Activated T-helper 1 cell treated with anti-CD3 and anti-CD28 coated beads, Interleukin-12 subunit alpha, Interleukin-12 subunit beta, Interleukin-2, Interleukin-4 antibody, amounts not matched to agents 30 ng/mL and 10 ng/mL and 1 ng/mL, durations not matched to agents 14 hours and 24 hours and 36 hours (primary cell): ENCODE measurements at regions of chr4 and their contacts with region 1.

Region 1: GRCh38 chr4:22515145-22515887 is 550 bp downstream of the ADGRA3 start:
- DNase-seq: peak; percentile 12
- H3K4me3 Mint-ChIP-seq: peak overlapping the region; percentile 96
- H3K27ac Mint-ChIP-seq: peak overlapping the region; percentile 92
- H3K4me1 Mint-ChIP-seq: peaks cover 23% of the 10 kb centered on the region
- H3K27me3 Mint-ChIP-seq: peaks cover 4% of the 10 kb centered on the region

Region 2: DNA sequence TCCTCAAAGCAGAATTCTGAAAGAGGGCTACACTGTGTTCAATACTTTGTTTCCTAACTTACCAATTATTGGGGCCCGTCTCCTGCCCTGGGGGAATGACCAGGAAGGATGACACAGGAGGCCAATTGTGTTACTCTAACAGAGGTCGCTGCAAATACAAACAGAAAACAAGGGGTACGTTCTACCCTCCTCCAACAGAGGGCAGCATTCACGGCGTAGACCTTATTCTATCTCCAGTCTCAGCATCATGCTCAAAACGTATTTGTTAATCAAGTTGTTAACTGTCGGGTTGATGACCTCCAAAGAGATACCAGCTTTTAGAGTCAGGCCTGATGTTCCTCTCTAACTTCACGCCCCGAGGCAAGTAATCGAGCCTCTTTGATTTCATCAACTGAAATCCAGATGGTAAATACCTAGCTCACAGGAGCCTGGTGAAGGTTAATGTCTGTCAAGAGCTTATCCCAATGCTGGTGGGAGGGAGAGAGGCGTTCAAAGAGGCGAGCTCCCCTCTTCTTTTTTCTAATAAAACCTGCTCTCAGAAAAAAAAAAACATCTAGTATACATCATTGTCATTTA is 385.8 kb before region 1 on chr4:
- intact Hi-C with region 1: no loop called
- DNase-seq: peak; percentile 0
- H3K4me3 Mint-ChIP-seq: no peak overlapping the region
- H3K27ac Mint-ChIP-seq: no peak overlapping the region
- H3K4me1 Mint-ChIP-seq: no peaks in the 10 kb centered on the region
- H3K27me3 Mint-ChIP-seq: no peaks in the 10 kb centered on the region

Region 3: GRCh38 chr4:22444813-22445212 is 70.5 kb before region 1 on chr4:
- intact Hi-C with region 1: loop called (anchors 1 kb)
- DNase-seq: no peak
- H3K4me3 Mint-ChIP-seq: peak overlapping the region; percentile 78
- H3K27ac Mint-ChIP-seq: peak overlapping the region; percentile 93
- H3K4me1 Mint-ChIP-seq: peaks cover 36% of the 10 kb centered on the region
- H3K27me3 Mint-ChIP-seq: no peaks in the 10 kb centered on the region

Region 4: DNA sequence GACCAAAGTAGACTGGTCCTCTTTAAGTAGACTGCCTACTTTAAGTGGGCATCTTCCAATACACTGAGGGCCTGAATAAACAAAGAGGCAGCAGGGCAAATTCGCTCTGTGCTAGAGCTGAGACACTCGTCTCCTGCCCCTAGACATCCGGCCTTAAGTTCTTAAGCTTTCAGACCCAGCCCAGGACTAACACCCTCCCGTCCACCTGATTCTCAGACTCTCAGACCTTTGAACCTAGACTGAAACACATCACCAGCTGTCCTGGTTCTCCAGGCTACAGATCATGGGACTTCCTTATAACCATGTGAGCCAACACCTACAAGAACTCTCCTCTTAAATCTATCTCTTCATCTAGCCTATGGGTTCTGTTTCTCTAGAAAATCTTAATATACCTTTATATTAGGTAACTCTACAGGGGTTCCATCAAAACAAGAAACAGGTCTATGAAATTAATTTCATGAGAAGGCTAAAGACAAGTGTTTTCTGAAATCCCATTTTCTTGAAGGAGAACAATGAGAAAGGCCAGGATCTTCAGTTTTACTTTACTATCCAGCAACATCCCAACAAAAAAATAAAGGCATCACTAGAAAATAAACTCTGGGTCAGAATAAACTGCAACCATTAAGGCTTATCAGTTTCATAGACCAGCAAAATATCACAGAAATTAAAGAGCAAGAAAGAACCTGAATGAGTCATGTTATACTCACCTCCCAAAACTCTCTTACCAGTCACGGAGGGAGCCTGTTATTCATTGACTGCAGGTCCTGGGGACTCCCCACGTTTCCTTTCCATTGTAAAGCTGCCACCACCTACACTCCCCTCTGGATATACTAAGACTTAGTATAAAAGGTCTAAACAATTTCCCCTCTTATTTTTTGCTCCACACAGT is 14.2 kb before region 1 on chr4:
- intact Hi-C with region 1: loop called (anchors 1 kb)
- DNase-seq: no peak
- H3K4me3 Mint-ChIP-seq: peak overlapping the region; percentile 11
- H3K27ac Mint-ChIP-seq: peak overlapping the region; percentile 73
- H3K4me1 Mint-ChIP-seq: peaks cover 6% of the 10 kb centered on the region
- H3K27me3 Mint-ChIP-seq: no peaks in the 10 kb centered on the region

Region 5: DNA sequence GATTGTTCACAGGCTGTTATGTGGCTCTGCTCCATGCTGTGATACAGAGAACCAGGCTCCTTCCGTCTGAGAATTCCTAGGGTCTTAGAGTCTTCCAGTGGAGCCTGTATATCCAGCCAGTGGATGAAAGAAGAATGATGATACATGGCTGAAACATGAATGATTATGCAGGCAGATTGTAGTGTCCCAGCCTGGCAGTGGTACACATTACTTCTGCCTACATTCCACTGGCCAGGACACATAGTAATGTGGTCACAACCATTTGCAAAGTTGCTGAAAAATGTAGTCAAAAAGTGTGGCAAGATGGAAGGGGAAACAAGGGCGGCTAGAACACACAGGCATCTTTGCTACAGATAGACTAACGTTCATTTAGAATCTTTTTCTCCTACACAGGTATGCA is 172.9 kb after region 1 on chr4:
- intact Hi-C with region 1: loop called (anchors 5 kb)
- DNase-seq: no peak
- H3K4me3 Mint-ChIP-seq: no peak overlapping the region
- H3K27ac Mint-ChIP-seq: no peak overlapping the region
- H3K4me1 Mint-ChIP-seq: no peaks in the 10 kb centered on the region
- H3K27me3 Mint-ChIP-seq: peaks cover 10% of the 10 kb centered on the region